AG04449 (cell line): ENCODE measurements at regions of chr19 and their contacts with region 1.

Region 1: GRCh38 chr19:48674921-48675824 is 2.4 kb upstream of the NTN5 start:
- DNase-seq: no peak
- H3K4me3 ChIP-seq: no peak overlapping the region
- CTCF ChIP-seq: peak; percentile 89

Region 2: GRCh38 chr19:48660854-48661731 is 14.1 kb before region 1 on chr19:
- CTCF ChIA-PET with region 1: interaction called, 58 read pairs
- POLR2A ChIA-PET with region 1: no interaction called
- DNase-seq: no peak
- H3K4me3 ChIP-seq: no peak overlapping the region
- CTCF ChIP-seq: no peak

Region 3: GRCh38 chr19:48698046-48698445 is 22.9 kb after region 1 on chr19:
- CTCF ChIA-PET with region 1: interaction called, 55 read pairs
- POLR2A ChIA-PET with region 1: no interaction called
- DNase-seq: no peak
- H3K4me3 ChIP-seq: no peak overlapping the region
- CTCF ChIP-seq: no peak

Region 4: DNA sequence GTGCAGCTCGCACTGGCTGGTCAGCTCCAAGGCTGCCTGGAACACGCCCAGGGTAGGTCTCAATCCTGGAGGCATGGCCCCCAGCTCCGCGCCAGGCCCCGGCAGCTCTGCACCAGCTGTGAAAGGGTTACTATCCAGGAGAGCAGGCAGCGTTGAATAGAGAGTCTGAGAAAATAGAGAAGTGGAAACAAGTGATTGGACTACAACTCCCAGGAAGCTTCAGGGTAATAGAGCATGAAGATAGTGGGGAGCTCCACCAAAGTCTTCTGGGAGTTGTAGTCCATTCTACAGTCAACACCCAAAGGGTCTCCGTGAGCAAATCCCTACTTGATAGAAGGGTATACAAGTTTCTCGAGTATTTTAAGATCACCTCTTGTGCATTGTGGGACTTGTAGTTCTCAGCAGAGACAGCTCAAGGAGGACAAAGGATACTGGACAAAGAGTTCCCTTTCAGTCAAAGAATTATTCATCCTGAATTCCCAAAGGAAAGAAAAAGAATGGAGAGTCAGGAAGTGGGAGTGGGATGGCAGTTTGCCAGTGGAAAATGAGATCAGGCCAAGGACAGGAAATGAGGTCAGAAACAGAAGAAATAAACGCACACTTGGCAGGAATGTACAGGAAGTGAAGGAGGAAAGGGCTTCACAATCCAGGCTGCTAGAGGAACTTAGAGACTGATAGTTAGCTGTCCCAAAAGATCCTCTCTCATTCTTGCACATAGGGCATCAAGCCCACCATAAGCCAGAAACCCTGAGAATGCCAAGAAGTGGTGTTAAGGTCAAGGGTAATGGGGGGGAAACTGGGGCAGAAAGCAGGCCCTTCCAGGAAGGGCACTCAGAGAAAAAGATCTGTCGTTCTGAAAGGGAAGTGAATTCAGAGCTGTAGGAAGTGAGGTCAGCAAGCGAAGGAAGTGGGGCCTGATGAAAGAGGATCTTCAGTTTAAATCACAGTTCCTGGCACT is 49.9 kb after region 1 on chr19:
- CTCF ChIA-PET with region 1: interaction called, 10 read pairs
- POLR2A ChIA-PET with region 1: no interaction called
- DNase-seq: peak; percentile 23
- H3K4me3 ChIP-seq: no peak overlapping the region
- CTCF ChIP-seq: no peak

Region 5: GRCh38 chr19:48780631-48781391 is 105.6 kb after region 1 on chr19:
- CTCF ChIA-PET with region 1: interaction called, 53 read pairs
- POLR2A ChIA-PET with region 1: no interaction called
- DNase-seq: no peak
- H3K4me3 ChIP-seq: no peak overlapping the region
- CTCF ChIP-seq: no peak